ENCODE measurements at regions of chr5 and their contacts with region 1.

Region 1: GRCh38 chr5:150409638-150410523 is 2.8 kb downstream of the CD74 start:
- DNase-seq: peak; percentile 38
- H3K4me3 Mint-ChIP-seq: peak overlapping the region; percentile 91
- H3K27ac Mint-ChIP-seq: peak overlapping the region; percentile 98
- H3K4me1 Mint-ChIP-seq: peaks cover 45% of the 10 kb centered on the region
- H3K27me3 Mint-ChIP-seq: no peaks in the 10 kb centered on the region

Region 2: DNA sequence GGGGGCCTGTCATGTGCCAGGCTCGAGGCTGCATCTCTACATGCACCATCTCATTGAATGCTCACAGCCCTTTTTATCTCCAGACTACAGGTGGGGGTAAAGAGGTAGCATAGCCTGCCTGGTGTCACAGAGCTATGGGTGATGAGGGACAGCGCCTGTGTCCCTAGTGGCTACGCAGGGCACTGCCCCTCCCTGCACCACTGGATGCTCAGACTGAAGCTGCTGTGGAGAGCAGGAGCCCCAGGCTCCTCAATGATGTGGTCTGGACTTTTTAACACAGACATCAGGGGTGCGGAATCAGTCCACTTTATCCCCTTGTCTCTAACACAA is 123.0 kb before region 1 on chr5:
- intact Hi-C with region 1: no loop called
- DNase-seq: no peak
- H3K4me3 Mint-ChIP-seq: no peak overlapping the region
- H3K27ac Mint-ChIP-seq: no peak overlapping the region
- H3K4me1 Mint-ChIP-seq: no peaks in the 10 kb centered on the region
- H3K27me3 Mint-ChIP-seq: peaks cover 4% of the 10 kb centered on the region

Region 3: GRCh38 chr5:150357326-150358260 is 52.3 kb before region 1 on chr5 and contains the start of gene TCOF1:
- intact Hi-C with region 1: loop called (anchors 1 kb)
- DNase-seq: peak; percentile 97
- H3K4me3 Mint-ChIP-seq: peak within 1 kb of the TSS; percentile 93
- H3K27ac Mint-ChIP-seq: peak within 1 kb of the TSS; percentile 91
- H3K4me1 Mint-ChIP-seq: peaks cover 39% of the 10 kb centered on the region
- H3K27me3 Mint-ChIP-seq: no peaks in the 10 kb centered on the region
- total RNA-seq, gene TCOF1: 130 and 131 TPM in 2 replicates

Region 4: GRCh38 chr5:150428106-150428876 is 18.4 kb after region 1 on chr5:
- intact Hi-C with region 1: no loop called
- DNase-seq: no peak
- H3K4me3 Mint-ChIP-seq: no peak overlapping the region
- H3K27ac Mint-ChIP-seq: no peak overlapping the region
- H3K4me1 Mint-ChIP-seq: no peaks in the 10 kb centered on the region
- H3K27me3 Mint-ChIP-seq: peaks cover 8% of the 10 kb centered on the region

Region 5: DNA sequence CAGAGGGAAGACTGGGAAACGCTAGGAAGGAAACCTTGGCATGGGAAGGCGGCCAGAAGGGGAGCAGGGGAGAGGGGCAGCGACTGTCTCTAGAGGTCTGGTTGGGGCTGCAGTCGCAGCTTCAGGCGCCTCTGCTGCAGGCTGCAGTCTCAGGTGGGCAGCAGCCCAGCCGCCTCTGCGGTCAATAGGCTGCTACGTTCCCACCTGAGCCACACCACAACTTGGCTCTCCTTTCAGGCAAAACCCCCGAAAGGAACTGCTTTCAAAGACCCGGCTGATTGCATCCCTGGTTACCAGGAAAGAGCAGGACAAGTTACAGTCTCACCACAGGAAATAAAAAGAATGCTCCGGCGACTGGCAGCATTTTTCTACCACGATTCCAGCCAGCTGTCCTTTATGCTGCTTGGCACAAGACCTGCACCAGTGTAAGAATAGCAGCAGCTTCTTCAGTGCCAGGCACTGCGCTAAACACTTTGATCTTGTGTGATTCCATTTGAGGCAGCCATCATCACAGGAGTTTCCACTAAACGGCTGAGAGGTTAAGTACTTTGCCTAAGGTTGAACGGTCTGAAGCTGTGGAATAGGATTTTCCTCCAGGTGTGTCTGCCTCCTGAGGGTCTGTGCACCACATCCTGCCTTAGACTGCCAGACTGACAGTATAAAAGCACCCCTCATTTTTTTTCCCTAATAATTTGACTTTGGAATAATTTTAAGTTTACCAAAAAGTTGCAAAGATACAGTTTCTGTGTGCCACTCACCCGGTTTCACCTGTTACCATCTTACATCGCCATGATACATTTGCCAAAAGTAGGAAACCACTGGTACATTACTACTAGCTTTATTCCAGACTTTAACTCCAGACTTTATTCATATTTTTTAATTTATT is 32.2 kb after region 1 on chr5:
- intact Hi-C with region 1: no loop called
- DNase-seq: no peak
- H3K4me3 Mint-ChIP-seq: no peak overlapping the region
- H3K27ac Mint-ChIP-seq: peak overlapping the region; percentile 25
- H3K4me1 Mint-ChIP-seq: peaks cover 17% of the 10 kb centered on the region
- H3K27me3 Mint-ChIP-seq: peaks cover 2% of the 10 kb centered on the region

Region 6: GRCh38 chr5:150486402-150487198 is 76.7 kb after region 1 on chr5:
- intact Hi-C with region 1: loop called (anchors 2 kb)
- DNase-seq: peak; percentile 11
- H3K4me3 Mint-ChIP-seq: peak overlapping the region; percentile 68
- H3K27ac Mint-ChIP-seq: no peak overlapping the region
- H3K4me1 Mint-ChIP-seq: no peaks in the 10 kb centered on the region
- H3K27me3 Mint-ChIP-seq: peaks cover 11% of the 10 kb centered on the region